Natural killer cell (primary cell): ENCODE measurements at regions of chr18 and their contacts with region 1.

Region 1: GRCh38 chr18:31648966-31649429 is 35.4 kb downstream of the B4GALT6 start:
- DNase-seq: no peak
- ATAC-seq: peak in 2 of 3 donors; percentile 26 to 34
- H3K4me3 ChIP-seq: no peak overlapping the region
- H3K4me3 Mint-ChIP-seq: peak overlapping the region; percentile 83
- H3K27ac ChIP-seq: no peak overlapping the region
- H3K27ac Mint-ChIP-seq: peak overlapping the region; percentile 72 to 91
- H3K4me1 ChIP-seq: peaks cover 34% of the 10 kb centered on the region
- H3K4me1 Mint-ChIP-seq: peaks cover 68 to 74% of the 10 kb centered on the region in 2 donors
- H3K27me3 ChIP-seq: no peaks in the 10 kb centered on the region
- H3K27me3 Mint-ChIP-seq: no peaks in the 10 kb centered on the region
- CTCF ChIP-seq: no peak

Region 2: DNA sequence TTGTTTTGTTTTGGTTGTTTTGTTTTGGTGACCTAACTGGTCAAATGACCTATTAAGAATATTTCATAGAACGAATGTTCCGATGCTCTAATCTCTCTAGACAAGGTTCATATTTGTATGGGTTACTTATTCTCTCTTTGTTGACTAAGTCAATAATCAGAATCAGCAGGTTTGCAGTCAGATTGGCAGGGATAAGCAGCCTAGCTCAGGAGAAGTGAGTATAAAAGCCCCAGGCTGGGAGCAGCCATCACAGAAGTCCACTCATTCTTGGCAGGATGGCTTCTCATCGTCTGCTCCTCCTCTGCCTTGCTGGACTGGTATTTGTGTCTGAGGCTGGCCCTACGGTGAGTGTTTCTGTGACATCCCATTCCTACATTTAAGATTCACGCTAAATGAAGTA is 57.4 kb before region 1 on chr18 and contains the start of gene TTR:
- intact Hi-C with region 1: no loop called
- DNase-seq: no peak
- ATAC-seq: no peak
- H3K4me3 ChIP-seq: no peak within 1 kb of the TSS
- H3K4me3 Mint-ChIP-seq: no peak within 1 kb of the TSS
- H3K27ac ChIP-seq: no peak within 1 kb of the TSS
- H3K27ac Mint-ChIP-seq: no peak within 1 kb of the TSS
- H3K4me1 ChIP-seq: no peaks in the 10 kb centered on the region
- H3K4me1 Mint-ChIP-seq: no peaks in the 10 kb centered on the region
- H3K27me3 ChIP-seq: no peaks in the 10 kb centered on the region
- H3K27me3 Mint-ChIP-seq: peaks cover 8 to 28% of the 10 kb centered on the region in 2 donors
- CTCF ChIP-seq: no peak
- total RNA-seq, gene TTR: not detected

Region 3: DNA sequence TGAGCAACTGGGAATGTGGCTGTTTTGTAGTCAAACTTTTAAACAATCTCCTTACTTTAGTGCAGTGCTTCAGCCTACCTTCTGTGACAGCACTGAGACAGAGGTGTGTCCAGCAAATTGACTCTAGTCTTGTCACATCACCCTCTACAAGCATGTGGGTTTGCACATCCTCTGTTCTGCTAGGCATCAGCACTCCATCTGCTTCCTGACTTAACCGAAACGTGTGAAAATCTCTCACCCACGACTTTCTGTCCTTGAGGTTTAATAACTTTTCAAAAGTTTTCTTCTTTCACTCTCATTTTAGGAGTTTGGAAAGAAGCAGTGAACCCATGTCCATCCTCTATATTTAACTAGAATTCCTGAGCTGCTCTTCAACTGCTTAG is 14.7 kb before region 1 on chr18:
- intact Hi-C with region 1: loop called (anchors 2 kb)
- DNase-seq: peak in 1 of 2 donors; percentile 59
- ATAC-seq: peak; percentile 92 to 98 (median 95)
- H3K4me3 ChIP-seq: no peak overlapping the region
- H3K4me3 Mint-ChIP-seq: peak overlapping the region; percentile 91
- H3K27ac ChIP-seq: peak overlapping the region; percentile 85
- H3K27ac Mint-ChIP-seq: peak overlapping the region; percentile 90 to 98
- H3K4me1 ChIP-seq: peaks cover 35% of the 10 kb centered on the region
- H3K4me1 Mint-ChIP-seq: peaks cover 42 to 46% of the 10 kb centered on the region in 2 donors
- H3K27me3 ChIP-seq: no peaks in the 10 kb centered on the region
- H3K27me3 Mint-ChIP-seq: no peaks in the 10 kb centered on the region
- CTCF ChIP-seq: no peak

Region 4: GRCh38 chr18:31685097-31686082 is 36.4 kb after region 1 on chr18:
- intact Hi-C with region 1: loop called (anchors 5 kb)
- DNase-seq: peak; percentile 71 to 77
- ATAC-seq: peak; percentile 73 to 83 (median 79)
- H3K4me3 ChIP-seq: peak overlapping the region; percentile 70
- H3K4me3 Mint-ChIP-seq: peak overlapping the region; percentile 85
- H3K27ac ChIP-seq: peak overlapping the region; percentile 96
- H3K27ac Mint-ChIP-seq: peak overlapping the region; percentile 86 to 90
- H3K4me1 ChIP-seq: peaks cover 15% of the 10 kb centered on the region
- H3K4me1 Mint-ChIP-seq: peaks cover 38 to 45% of the 10 kb centered on the region in 2 donors
- H3K27me3 ChIP-seq: no peaks in the 10 kb centered on the region
- H3K27me3 Mint-ChIP-seq: peaks cover 0 to 2% of the 10 kb centered on the region in 2 donors
- CTCF ChIP-seq: peak; percentile 37

Region 5: GRCh38 chr18:31722369-31722957 is 73.5 kb after region 1 on chr18:
- intact Hi-C with region 1: no loop called
- DNase-seq: peak; percentile 73 to 83
- ATAC-seq: peak; percentile 87 to 100 (median 98)
- H3K4me3 ChIP-seq: no peak overlapping the region
- H3K4me3 Mint-ChIP-seq: no peak overlapping the region
- H3K27ac ChIP-seq: no peak overlapping the region
- H3K27ac Mint-ChIP-seq: no peak overlapping the region
- H3K4me1 ChIP-seq: peaks cover 8% of the 10 kb centered on the region
- H3K4me1 Mint-ChIP-seq: peaks cover 4 to 7% of the 10 kb centered on the region in 2 donors
- H3K27me3 ChIP-seq: peaks cover 8% of the 10 kb centered on the region
- H3K27me3 Mint-ChIP-seq: peaks cover 17% of the 10 kb centered on the region in 2 donors
- CTCF ChIP-seq: peak; percentile 94